MCF 10A (cell line): ENCODE measurements at regions of chrX and their contacts with region 1.

Region 1: GRCh38 chrX:78103623-78104446 is at the start of gene PGK1:
- DNase-seq: peak; percentile 92
- H3K4me3 Mint-ChIP-seq: peak within 1 kb of the TSS; percentile 78
- H3K27ac Mint-ChIP-seq: peak within 1 kb of the TSS; percentile 86
- H3K4me1 Mint-ChIP-seq: peaks cover 18% of the 10 kb centered on the region
- H3K27me3 Mint-ChIP-seq: no peaks in the 10 kb centered on the region
- CTCF ChIP-seq: no peak
- total RNA-seq, gene PGK1: 279 and 310 TPM in 2 replicates

Region 2: GRCh38 chrX:77502951-77503525 is 600.8 kb before region 1 on chrX:
- CTCF ChIA-PET with region 1: no interaction called
- POLR2A ChIA-PET with region 1: no interaction called
- intact Hi-C with region 1: no loop called
- DNase-seq: no peak
- H3K4me3 Mint-ChIP-seq: no peak overlapping the region
- H3K27ac Mint-ChIP-seq: no peak overlapping the region
- H3K4me1 Mint-ChIP-seq: no peaks in the 10 kb centered on the region
- H3K27me3 Mint-ChIP-seq: no peaks in the 10 kb centered on the region
- CTCF ChIP-seq: no peak

Region 3: DNA sequence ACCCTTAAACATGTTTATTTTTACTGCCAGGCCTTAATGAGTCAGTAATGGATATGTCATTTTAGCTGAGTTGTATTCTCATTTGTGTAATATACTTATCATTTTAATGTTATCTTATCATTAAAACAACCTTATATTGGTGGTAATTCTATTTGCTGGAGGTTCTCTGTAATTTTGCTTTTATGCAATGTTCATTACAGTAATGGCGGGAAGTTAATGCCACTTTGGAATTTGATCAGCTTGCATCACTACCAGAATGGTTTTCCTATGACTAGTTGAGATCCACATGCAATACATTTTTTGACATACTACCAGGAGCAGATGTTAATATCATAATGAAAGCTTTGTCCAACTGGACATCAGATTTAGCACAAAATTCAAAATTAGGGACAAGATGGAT is 128.0 kb before region 1 on chrX:
- CTCF ChIA-PET with region 1: no interaction called
- POLR2A ChIA-PET with region 1: no interaction called
- intact Hi-C with region 1: no loop called
- DNase-seq: peak; percentile 3
- H3K4me3 Mint-ChIP-seq: no peak overlapping the region
- H3K27ac Mint-ChIP-seq: no peak overlapping the region
- H3K4me1 Mint-ChIP-seq: no peaks in the 10 kb centered on the region
- H3K27me3 Mint-ChIP-seq: no peaks in the 10 kb centered on the region
- CTCF ChIP-seq: no peak

Region 4: GRCh38 chrX:78092296-78092695 is 11.5 kb before region 1 on chrX:
- CTCF ChIA-PET with region 1: interaction called, 16 read pairs
- POLR2A ChIA-PET with region 1: interaction called, 3 read pairs
- intact Hi-C with region 1: no loop called
- DNase-seq: peak; percentile 57
- H3K4me3 Mint-ChIP-seq: no peak overlapping the region
- H3K27ac Mint-ChIP-seq: peak overlapping the region; percentile 23
- H3K4me1 Mint-ChIP-seq: no peaks in the 10 kb centered on the region
- H3K27me3 Mint-ChIP-seq: no peaks in the 10 kb centered on the region
- CTCF ChIP-seq: peak; percentile 24